Mammary epithelial cell (primary cell): ENCODE measurements at regions of chr1 and their contacts with region 1.

Region 1: DNA sequence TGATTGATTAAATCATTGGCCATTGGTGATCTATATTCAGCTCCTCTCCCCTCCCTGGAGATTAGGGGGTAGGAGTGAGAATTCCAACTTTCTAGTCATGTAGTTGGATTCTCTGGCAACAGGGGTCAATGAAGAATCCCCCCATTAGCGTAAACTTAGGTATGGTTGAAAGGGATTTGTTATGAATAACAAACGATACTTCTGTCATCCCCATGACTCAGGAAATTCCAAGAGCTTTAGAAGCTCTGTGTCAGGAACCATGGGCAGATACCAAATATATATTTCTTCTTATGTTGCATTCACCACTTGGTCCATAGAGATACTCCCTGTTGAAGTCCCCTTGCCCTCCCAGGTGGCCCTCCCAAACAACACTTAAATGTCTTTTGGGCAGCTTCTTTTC is 124.5 kb downstream of the DNM3 start:
- DNase-seq: peak; percentile 30
- H3K4me3 ChIP-seq: no peak overlapping the region
- H3K27ac ChIP-seq: no peak overlapping the region
- H3K4me1 ChIP-seq: peaks cover 16% of the 10 kb centered on the region
- H3K27me3 ChIP-seq: no peaks in the 10 kb centered on the region
- CTCF ChIP-seq: no peak

Region 2: DNA sequence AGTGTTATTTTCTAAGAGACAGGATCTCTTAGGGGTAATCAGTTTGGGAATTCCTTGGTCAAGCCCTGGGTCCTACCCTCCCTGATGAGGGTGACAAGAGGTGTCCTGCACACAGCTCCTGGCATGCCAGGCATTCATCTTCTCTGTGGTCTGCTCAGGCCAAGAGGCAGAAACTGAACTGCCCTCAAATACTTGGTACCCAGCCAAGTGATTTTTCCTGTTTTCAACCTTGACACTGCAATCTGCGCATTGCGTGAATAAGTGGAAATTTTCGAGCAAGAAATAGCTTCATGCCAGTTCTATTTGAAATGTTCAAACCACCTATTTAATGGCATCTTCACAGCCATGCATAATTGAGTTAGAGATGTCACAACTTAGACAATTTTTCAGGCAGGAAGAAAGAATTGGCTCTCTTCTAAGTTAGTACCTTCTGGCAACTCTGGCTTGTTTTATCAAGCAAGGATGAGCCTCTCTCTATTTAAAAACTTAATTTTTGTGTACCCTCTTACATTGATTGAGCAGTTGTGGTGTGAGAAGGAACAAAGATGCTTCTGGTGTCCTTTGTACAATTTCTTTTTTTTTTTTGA is 97.5 kb before region 1 on chr1:
- CTCF ChIA-PET with region 1: no interaction called
- dilution Hi-C with region 1: loop called (anchors 5 kb)
- in situ Hi-C with region 1: no loop called
- intact Hi-C with region 1: no loop called
- DNase-seq: peak; percentile 49
- H3K4me3 ChIP-seq: no peak overlapping the region
- H3K27ac ChIP-seq: no peak overlapping the region
- H3K4me1 ChIP-seq: peaks cover 13% of the 10 kb centered on the region
- H3K27me3 ChIP-seq: no peaks in the 10 kb centered on the region
- CTCF ChIP-seq: no peak